Esophagus muscularis mucosa (tissue), 4 donors: ENCODE measurements at regions of chr12 and their contacts with region 1.

Region 1: GRCh38 chr12:105053116-105053572 is 31.1 kb downstream of the ALDH1L2 start:
- DNase-seq: peak; percentile 95
- H3K4me3 ChIP-seq: no peak overlapping the region
- H3K27ac ChIP-seq: no peak overlapping the region
- H3K4me1 ChIP-seq: peaks cover 0 to 7% (median 3%) of the 10 kb centered on the region in 4 donors
- H3K27me3 ChIP-seq: no peaks in the 10 kb centered on the region
- CTCF ChIP-seq: peak; percentile 84 to 92 (median 89)
- EP300 ChIP-seq: no peak
- POLR2A ChIP-seq: no peak

Region 2: DNA sequence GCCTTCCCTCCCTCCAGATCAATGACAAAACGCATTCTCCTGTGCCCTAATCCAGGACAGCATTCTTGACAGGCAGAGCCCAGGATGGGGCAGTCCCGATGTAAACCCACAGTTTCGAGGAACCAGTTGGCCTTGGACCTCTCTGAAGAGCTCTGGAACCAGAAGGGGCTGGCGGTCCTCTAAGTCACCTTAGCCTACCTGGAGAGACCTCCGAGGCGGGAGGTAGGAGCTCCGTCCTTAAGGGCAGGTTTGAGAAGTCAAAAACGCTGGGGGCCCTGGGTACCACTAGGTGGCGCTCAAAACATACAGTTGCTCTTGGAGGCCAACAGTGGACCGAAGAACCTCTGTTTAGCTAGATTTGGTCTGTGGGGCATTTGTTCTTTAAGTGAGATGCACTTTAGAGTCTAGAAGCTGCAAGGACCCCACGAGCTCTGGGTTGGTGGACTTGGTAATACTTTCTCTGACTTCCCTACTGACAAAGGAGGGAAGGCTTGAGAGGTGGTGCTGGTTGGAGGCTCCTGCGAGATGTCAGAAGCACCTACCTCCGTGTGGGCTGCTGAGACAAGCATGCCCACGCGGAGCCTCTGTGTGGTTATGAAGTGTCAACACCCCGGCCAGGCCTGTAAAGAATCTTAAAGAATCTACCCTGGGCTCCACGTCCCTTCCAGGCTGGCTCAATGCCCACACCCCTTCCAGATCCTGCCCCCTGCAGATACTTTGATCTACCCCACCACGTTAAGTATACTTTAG is 671.2 kb before region 1 on chr12:
- intact Hi-C with region 1: loop called (anchors 5 kb)
- DNase-seq: peak; percentile 94
- H3K4me3 ChIP-seq: no peak overlapping the region
- H3K27ac ChIP-seq: no peak overlapping the region
- H3K4me1 ChIP-seq: peaks cover 7 to 10% (median 8%) of the 10 kb centered on the region in 4 donors
- H3K27me3 ChIP-seq: no peaks in the 10 kb centered on the region
- CTCF ChIP-seq: peak; percentile 87 to 98 (median 93)
- EP300 ChIP-seq: no peak
- POLR2A ChIP-seq: no peak

Region 3: GRCh38 chr12:104632724-104633201 is 420.4 kb before region 1 on chr12:
- intact Hi-C with region 1: no loop called
- DNase-seq: no peak
- H3K4me3 ChIP-seq: no peak overlapping the region
- H3K27ac ChIP-seq: no peak overlapping the region
- H3K4me1 ChIP-seq: peaks cover 0 to 4% (median 1%) of the 10 kb centered on the region in 4 donors
- H3K27me3 ChIP-seq: no peaks in the 10 kb centered on the region
- CTCF ChIP-seq: no peak
- EP300 ChIP-seq: no peak
- POLR2A ChIP-seq: no peak

Region 4: DNA sequence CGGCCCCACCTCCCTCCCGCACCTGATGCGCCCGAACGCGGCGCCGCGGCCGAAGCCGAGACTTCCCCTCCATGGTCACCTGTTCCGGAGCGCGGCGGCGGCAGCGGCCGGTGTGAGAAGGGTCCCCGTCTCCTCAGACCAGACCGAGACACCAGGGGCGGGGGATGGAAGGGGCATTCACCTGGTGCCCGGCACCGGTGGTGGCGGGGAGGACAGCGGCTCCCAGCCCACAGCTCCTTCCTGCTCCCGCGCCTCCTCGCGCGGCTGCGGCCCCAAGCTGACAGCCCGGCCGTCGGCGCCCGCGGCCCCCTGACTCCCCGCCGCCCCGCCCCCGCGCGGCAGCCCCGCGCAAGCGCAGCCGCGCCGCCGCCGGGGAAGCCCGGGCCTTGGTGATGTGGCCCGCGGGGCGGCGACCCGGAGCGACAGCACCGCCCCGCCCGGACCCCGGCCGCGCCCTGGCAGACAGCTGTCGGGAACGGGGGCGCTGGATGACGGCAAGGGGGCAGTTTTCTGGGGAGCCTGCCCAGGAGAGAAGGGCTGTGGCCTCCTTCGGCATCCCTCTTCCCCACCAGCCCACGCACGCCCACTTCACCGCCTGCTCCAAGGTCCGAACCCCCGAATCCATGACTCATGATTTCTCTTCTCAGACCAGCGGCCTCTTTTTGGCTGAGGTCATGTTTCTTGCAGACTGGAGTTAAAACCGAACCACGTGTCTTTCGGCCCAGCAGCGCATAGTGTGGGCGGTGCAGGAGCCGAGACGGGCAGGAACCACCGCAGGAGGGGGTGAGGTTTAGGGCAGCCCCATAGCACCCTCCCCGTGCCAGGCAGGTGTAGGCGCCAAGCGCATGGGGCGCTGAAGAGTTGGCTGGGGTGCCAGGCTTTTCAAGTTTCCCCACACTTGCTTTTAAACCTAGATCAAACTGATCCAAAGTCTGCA is 94.9 kb before region 1 on chr12 and contains the start of gene SLC41A2:
- intact Hi-C with region 1: loop called (anchors 10 kb)
- DNase-seq: peak; percentile 93
- H3K4me3 ChIP-seq: peak within 1 kb of the TSS; percentile 88 to 96 (median 90)
- H3K27ac ChIP-seq: peak within 1 kb of the TSS; percentile 78 to 86 (median 82)
- H3K4me1 ChIP-seq: peaks cover 9 to 25% (median 21%) of the 10 kb centered on the region in 4 donors
- H3K27me3 ChIP-seq: no peaks in the 10 kb centered on the region
- CTCF ChIP-seq: peak in 2 of 3 experiments; percentile 19 to 44
- EP300 ChIP-seq: no peak
- POLR2A ChIP-seq: no peak
- total RNA-seq, gene SLC41A2: 22.4 to 27.8 (median 23.9) TPM

Region 5: DNA sequence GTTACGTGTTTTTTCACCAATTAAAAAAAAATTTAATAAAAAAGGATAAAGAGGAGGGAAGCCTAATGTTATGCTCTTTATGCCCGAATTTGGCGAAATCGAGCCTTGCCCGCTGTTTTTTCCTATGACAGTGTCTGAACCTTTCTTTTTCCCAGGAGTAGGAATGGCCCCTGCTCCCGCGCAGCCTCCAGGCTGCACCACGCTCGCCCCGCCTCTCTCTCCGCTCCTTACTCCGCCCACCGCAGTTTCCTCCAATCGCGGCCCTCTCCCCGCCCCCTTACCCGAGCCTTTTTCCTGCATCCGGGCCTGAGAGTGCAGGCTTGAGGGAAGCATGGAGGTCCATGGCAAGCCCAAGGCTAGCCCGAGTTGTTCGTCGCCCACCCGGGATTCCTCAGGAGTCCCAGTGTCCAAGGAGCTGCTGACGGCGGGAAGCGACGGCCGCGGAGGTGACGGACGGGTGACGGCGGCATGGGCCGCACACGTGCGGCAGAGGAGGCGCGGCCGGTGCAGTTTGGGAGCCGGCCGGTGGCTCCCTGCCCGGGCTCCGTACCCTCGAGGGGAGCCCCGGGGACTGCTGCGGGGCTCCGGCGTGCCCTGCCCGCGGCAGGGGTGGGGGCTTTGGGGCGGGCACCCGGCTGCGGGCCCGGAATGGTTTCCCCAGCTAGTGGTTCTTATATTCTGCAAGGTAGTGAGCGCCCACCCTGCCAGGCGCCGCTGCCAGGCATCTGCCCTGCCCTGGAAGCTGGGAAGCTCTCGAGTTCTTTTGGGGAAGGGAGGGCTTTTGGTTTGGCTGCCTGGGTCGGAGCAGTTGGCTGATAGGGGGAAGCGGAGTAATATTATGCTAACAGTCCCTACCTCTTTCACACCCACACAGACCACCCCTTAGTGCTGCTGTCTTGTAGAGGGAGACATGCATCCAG is 66.9 kb before region 1 on chr12 and contains the start of gene NOPCHAP1:
- intact Hi-C with region 1: loop called (anchors 5 kb)
- DNase-seq: peak; percentile 98
- H3K4me3 ChIP-seq: peak within 1 kb of the TSS; percentile 74 to 96 (median 92)
- H3K27ac ChIP-seq: peak within 1 kb of the TSS; percentile 71 to 84 (median 76)
- H3K4me1 ChIP-seq: peaks cover 14 to 25% (median 21%) of the 10 kb centered on the region in 4 donors
- H3K27me3 ChIP-seq: no peaks in the 10 kb centered on the region
- CTCF ChIP-seq: no peak
- EP300 ChIP-seq: no peak
- POLR2A ChIP-seq: no peak
- total RNA-seq, gene NOPCHAP1: 4.6 to 7.9 (median 5.5) TPM